ENCODE measurements at regions of chr20 and their contacts with region 1.

Region 1: DNA sequence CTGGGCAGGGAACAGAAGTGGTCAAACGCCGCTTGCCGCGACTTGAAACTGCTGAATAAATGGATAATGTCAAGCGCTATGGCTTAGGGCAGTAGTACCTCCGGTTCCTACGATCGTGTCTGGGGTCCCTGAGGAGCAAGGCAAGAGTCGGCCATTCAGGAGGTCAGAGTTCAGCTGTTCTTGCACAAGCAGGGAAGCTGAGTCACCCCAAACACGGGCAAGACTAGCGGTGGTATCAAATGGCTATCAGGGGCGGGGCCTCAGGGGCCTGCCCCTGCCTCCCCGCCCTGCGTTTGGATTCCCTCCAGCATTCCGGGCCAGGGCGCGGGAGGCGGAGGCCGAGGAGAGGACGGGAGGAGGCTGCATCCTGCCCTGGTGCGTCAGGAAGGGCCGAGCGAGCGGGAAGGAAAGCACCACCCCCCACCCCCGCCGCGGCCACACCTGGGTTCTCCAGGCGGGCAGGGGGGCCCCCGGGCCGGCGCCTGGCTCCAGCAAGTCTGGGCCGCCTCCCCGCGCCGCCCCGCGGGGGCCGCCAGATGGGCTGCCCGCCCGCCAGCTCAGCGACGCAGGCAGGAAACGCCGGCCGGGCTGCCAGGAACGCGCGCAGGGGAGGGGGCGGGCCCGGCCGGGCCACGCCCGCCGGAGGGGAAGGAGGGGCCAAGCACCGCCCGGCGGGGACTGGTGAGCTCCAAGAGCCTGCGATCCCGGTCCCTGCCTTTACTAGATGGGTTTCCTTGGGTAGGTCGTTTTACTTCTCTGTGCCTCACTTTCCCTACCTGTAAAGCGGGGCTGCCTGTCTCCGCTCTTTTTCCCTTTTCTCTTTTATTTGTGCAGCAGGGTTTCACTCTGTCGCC is 32.2 kb upstream of the ID1 start:
- DNase-seq: peak; percentile 94
- ATAC-seq: peak; percentile 82
- H3K4me3 Mint-ChIP-seq: peak overlapping the region; percentile 83
- H3K27ac Mint-ChIP-seq: peak overlapping the region; percentile 97
- H3K4me1 Mint-ChIP-seq: peaks cover 60% of the 10 kb centered on the region
- H3K27me3 Mint-ChIP-seq: no peaks in the 10 kb centered on the region; the same call in 1 of the 2 replicates
- CTCF ChIP-seq: no peak

Region 2: GRCh38 chr20:31587545-31588389 is 14.8 kb after region 1 on chr20:
- CTCF ChIA-PET with region 1: interaction called, 30 read pairs
- POLR2A ChIA-PET with region 1: interaction called, 10 read pairs
- DNase-seq: no peak
- ATAC-seq: peak; percentile 27
- H3K4me3 Mint-ChIP-seq: peak overlapping the region; percentile 76
- H3K27ac Mint-ChIP-seq: peak overlapping the region; percentile 50
- H3K4me1 Mint-ChIP-seq: peaks cover 56% of the 10 kb centered on the region
- H3K27me3 Mint-ChIP-seq: peaks cover 14% of the 10 kb centered on the region
- CTCF ChIP-seq: no peak

Region 3: GRCh38 chr20:31595654-31596411 is 22.9 kb after region 1 on chr20:
- CTCF ChIA-PET with region 1: interaction called, 22 read pairs
- POLR2A ChIA-PET with region 1: interaction called, 12 read pairs
- DNase-seq: peak; percentile 75
- ATAC-seq: peak; percentile 79
- H3K4me3 Mint-ChIP-seq: peak overlapping the region; percentile 20; the same call in 1 of the 2 replicates
- H3K27ac Mint-ChIP-seq: peak overlapping the region; percentile 88
- H3K4me1 Mint-ChIP-seq: peaks cover 45% of the 10 kb centered on the region
- H3K27me3 Mint-ChIP-seq: no peaks in the 10 kb centered on the region
- CTCF ChIP-seq: no peak

Region 4: GRCh38 chr20:31605031-31605901 is 32.3 kb after region 1 on chr20 and contains the start of gene ID1:
- CTCF ChIA-PET with region 1: interaction called, 927 read pairs
- POLR2A ChIA-PET with region 1: interaction called, 73 read pairs
- DNase-seq: peak; percentile 95
- ATAC-seq: peak; percentile 54
- H3K4me3 Mint-ChIP-seq: peak within 1 kb of the TSS; percentile 96
- H3K27ac Mint-ChIP-seq: peak within 1 kb of the TSS; percentile 99
- H3K4me1 Mint-ChIP-seq: peaks cover 42% of the 10 kb centered on the region
- H3K27me3 Mint-ChIP-seq: peaks cover 2% of the 10 kb centered on the region; the same call in 1 of the 2 replicates
- CTCF ChIP-seq: no peak
- total RNA-seq, gene ID1: 88.8 to 158 TPM (median 149 TPM) in 3 replicates

Region 5: GRCh38 chr20:31617432-31618104 is 44.6 kb after region 1 on chr20:
- CTCF ChIA-PET with region 1: interaction called, 927 read pairs
- POLR2A ChIA-PET with region 1: interaction called, 30 read pairs
- DNase-seq: no peak
- ATAC-seq: no peak
- H3K4me3 Mint-ChIP-seq: no peak overlapping the region
- H3K27ac Mint-ChIP-seq: no peak overlapping the region
- H3K4me1 Mint-ChIP-seq: no peaks in the 10 kb centered on the region
- H3K27me3 Mint-ChIP-seq: peaks cover 36% of the 10 kb centered on the region
- CTCF ChIP-seq: no peak

Measured in WTC11 (cell line).